ENCODE measurements at regions of chr6 and their contacts with region 1.

Region 1: DNA sequence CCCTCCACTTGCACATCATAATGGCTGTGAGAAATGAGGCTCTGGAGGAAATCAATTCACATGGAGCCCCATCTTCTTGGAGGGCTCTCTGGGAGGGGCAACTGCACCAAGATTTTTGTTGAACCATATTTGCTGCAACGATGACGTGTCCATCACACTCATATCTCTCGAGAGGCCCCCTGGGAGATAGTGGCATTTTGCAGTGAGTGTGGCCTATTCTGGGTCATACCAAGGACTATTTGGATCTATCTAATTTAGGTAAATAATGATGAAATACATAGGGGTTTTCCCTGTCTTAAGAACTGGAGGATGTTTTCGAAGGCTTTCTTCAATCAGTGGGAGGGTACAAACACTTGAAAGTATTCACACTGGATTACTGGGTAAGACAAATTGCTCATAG is 31.6 kb downstream of the CNR1 start:
- DNase-seq: no peak
- H3K4me3 ChIP-seq: no peak overlapping the region
- H3K27ac ChIP-seq: peak overlapping the region in 3 of 4 donors; percentile 41 to 67 (median 65)
- H3K4me1 ChIP-seq: peaks cover 0 to 59% (median 37%) of the 10 kb centered on the region in 4 donors
- H3K27me3 ChIP-seq: no peaks in the 10 kb centered on the region
- CTCF ChIP-seq: no peak
- EP300 ChIP-seq: no peak
- POLR2A ChIP-seq: no peak

Region 2: GRCh38 chr6:88165844-88166492 is 31.4 kb after region 1 on chr6 and contains the start of gene CNR1:
- intact Hi-C with region 1: loop called (anchors 5 kb)
- DNase-seq: peak; percentile 89
- H3K4me3 ChIP-seq: peak within 1 kb of the TSS; percentile 51 to 72 (median 68)
- H3K27ac ChIP-seq: peak within 1 kb of the TSS; percentile 40 to 84 (median 81)
- H3K4me1 ChIP-seq: peaks cover 0 to 32% (median 18%) of the 10 kb centered on the region in 4 donors
- H3K27me3 ChIP-seq: peaks cover 0 to 35% (median 3%) of the 10 kb centered on the region in 3 donors
- CTCF ChIP-seq: peak in 1 of 4 experiments; percentile 41
- EP300 ChIP-seq: no peak
- POLR2A ChIP-seq: peak in 1 of 2 donors; percentile 14
- total RNA-seq, gene CNR1: 19.1 to 27.7 (median 24.6) TPM

Region 3: DNA sequence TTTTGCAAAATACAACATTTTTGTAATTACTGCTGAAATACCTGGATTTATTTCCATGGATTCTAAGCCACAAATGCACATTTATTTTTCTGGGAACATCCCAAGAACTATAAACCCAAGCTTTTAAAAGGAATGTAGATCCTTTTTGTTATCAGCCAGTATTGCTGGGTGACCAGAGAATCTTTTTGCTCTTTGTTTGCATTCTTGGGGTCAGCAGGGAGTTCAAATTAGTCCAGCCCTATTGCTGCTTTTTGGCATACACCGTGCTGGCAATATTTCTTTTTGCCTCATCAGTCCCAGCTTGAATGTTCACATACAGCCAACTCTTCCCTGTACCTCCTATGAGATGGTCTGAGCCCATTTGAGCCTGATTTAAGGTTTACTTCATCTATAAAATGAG is 186.7 kb after region 1 on chr6:
- intact Hi-C with region 1: no loop called
- DNase-seq: no peak
- H3K4me3 ChIP-seq: no peak overlapping the region
- H3K27ac ChIP-seq: no peak overlapping the region
- H3K4me1 ChIP-seq: no peaks in the 10 kb centered on the region
- H3K27me3 ChIP-seq: no peaks in the 10 kb centered on the region
- CTCF ChIP-seq: no peak
- EP300 ChIP-seq: no peak
- POLR2A ChIP-seq: no peak

Region 4: DNA sequence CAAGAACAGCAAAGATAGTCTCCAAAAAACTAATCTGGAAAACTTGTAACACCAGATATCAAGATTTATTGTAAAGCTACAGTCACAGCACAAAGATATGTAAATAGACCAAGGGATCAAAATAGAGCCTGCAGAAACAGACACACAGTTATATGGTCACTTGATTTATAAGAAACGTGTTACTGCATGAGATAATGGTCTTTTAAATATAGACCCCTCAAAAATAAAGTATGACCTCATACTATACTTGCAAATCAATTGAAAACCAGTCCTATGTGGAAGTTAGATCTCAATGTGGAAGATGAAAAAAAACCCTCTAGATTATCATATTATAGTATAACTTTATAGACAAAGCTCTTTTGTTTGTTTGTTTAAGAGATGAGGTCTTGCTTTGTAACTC is 278.9 kb after region 1 on chr6:
- intact Hi-C with region 1: no loop called
- DNase-seq: no peak
- H3K4me3 ChIP-seq: no peak overlapping the region
- H3K27ac ChIP-seq: no peak overlapping the region
- H3K4me1 ChIP-seq: no peaks in the 10 kb centered on the region
- H3K27me3 ChIP-seq: no peaks in the 10 kb centered on the region
- CTCF ChIP-seq: no peak
- EP300 ChIP-seq: no peak
- POLR2A ChIP-seq: no peak